Activated T-helper 1 cell treated with anti-CD3 and anti-CD28 coated beads, Interleukin-12 subunit alpha, Interleukin-12 subunit beta, Interleukin-2, Interleukin-4 antibody, amounts not matched to agents 30 ng/mL and 10 ng/mL and 1 ng/mL, durations not matched to agents 14 hours and 24 hours and 36 hours (primary cell): ENCODE measurements at regions of chr4 and their contacts with region 1.

Region 1: DNA sequence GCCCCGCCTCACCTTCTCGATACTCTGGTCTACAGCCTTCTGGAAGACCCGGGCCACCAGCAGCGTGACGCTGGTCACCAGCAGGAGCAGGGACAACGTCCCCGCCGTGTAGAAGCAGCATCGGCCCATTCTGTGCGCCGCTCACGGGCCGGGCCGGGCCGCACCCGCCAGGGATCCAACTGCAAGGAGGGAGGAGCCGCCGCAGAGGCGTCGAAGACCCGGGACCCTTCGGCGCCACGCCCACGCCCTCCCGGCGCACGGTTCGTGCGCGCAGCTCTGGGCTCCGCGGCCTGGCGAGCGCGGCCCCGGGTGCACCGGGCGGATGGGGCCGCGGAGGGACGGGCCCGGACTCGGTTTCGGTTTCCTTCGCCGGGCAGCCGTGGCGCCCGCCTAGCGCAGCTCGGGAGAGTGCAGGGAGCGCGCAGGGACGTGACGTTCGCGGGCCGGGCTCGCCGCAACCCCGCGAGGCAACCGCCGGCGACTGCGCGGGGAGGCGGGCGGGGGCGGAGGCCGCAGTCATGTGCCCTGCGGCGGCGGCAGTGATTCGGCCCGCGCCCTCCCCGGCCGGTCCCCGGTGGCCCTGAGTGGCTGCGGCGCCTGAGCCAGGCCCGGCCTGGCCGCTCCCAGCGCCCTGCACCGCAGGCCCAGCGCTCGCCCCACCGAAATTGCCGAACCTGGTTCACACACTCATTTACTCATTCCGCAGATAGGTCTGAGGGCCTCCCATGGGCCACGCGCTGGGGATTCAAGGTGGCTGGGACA is at the start of gene SCARB2:
- DNase-seq: peak; percentile 72
- H3K4me3 Mint-ChIP-seq: peak within 1 kb of the TSS; percentile 79
- H3K27ac Mint-ChIP-seq: peak within 1 kb of the TSS; percentile 67
- H3K4me1 Mint-ChIP-seq: peaks cover 33% of the 10 kb centered on the region
- H3K27me3 Mint-ChIP-seq: peaks cover 34% of the 10 kb centered on the region
- total RNA-seq, gene SCARB2: 1.3 and 1.4 TPM in 2 replicates

Region 2: GRCh38 chr4:75673027-75673958 is 540.3 kb before region 1 on chr4 and contains the start of gene G3BP2:
- intact Hi-C with region 1: loop called (anchors 5 kb)
- DNase-seq: peak; percentile 96
- H3K4me3 Mint-ChIP-seq: peak within 1 kb of the TSS; percentile 96
- H3K27ac Mint-ChIP-seq: peak within 1 kb of the TSS; percentile 98
- H3K4me1 Mint-ChIP-seq: peaks cover 40% of the 10 kb centered on the region
- H3K27me3 Mint-ChIP-seq: no peaks in the 10 kb centered on the region
- total RNA-seq, gene G3BP2: 143 and 144 TPM in 2 replicates

Region 3: GRCh38 chr4:76148142-76148865 is 65.3 kb before region 1 on chr4 and contains the start of gene NUP54:
- intact Hi-C with region 1: loop called (anchors 1 kb)
- DNase-seq: peak; percentile 94
- H3K4me3 Mint-ChIP-seq: peak within 1 kb of the TSS; percentile 99
- H3K27ac Mint-ChIP-seq: peak within 1 kb of the TSS; percentile 97
- H3K4me1 Mint-ChIP-seq: peaks cover 35% of the 10 kb centered on the region
- H3K27me3 Mint-ChIP-seq: no peaks in the 10 kb centered on the region
- total RNA-seq, gene NUP54: 70.6 and 75.1 TPM in 2 replicates

Region 4: DNA sequence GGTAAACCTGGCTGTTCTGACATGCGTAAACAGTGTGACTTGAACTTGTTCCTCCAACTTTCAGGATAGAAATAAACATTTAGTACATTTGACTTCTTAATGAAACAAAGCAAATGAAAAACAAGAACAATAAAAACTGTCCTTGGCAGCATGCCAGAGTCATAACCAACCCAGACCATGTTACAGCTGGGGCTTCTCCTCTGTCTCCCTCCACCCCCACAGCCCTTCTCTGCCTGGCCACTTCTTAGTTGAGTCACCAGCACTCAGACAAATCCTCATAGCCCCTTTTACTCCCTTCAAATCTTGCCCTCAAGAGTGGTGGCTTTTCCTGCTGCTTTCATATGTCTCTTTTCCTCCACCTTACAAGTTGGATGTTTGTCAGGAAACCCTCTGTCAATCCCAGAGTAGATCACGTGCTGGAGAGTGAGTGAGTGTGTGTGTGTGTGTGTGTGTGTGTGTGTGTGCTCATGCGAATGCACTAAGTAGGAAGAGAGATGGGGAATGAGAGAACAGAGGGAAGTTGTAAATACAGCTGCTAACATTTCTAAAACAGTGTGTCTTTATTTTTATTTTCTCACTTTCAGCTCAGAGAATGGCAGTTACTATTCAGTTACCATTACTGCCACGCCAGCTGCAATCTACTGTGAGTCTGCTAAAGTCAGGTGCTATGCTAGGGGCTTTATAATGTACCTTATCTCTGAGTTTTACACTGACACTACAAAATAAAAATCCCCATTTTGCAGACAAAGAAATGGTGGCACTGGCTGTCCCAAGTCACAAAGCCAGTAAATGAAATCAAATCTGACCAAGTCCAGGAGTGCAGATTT is 15.0 kb before region 1 on chr4:
- intact Hi-C with region 1: loop called (anchors 2 kb)
- DNase-seq: no peak
- H3K4me3 Mint-ChIP-seq: no peak overlapping the region
- H3K27ac Mint-ChIP-seq: no peak overlapping the region
- H3K4me1 Mint-ChIP-seq: peaks cover 33% of the 10 kb centered on the region
- H3K27me3 Mint-ChIP-seq: no peaks in the 10 kb centered on the region

Region 5: GRCh38 chr4:76354517-76355473 is 141.2 kb after region 1 on chr4:
- intact Hi-C with region 1: loop called (anchors 1 kb)
- DNase-seq: peak; percentile 14
- H3K4me3 Mint-ChIP-seq: peak overlapping the region; percentile 1
- H3K27ac Mint-ChIP-seq: no peak overlapping the region
- H3K4me1 Mint-ChIP-seq: peaks cover 21% of the 10 kb centered on the region
- H3K27me3 Mint-ChIP-seq: peaks cover 8% of the 10 kb centered on the region

Region 6: DNA sequence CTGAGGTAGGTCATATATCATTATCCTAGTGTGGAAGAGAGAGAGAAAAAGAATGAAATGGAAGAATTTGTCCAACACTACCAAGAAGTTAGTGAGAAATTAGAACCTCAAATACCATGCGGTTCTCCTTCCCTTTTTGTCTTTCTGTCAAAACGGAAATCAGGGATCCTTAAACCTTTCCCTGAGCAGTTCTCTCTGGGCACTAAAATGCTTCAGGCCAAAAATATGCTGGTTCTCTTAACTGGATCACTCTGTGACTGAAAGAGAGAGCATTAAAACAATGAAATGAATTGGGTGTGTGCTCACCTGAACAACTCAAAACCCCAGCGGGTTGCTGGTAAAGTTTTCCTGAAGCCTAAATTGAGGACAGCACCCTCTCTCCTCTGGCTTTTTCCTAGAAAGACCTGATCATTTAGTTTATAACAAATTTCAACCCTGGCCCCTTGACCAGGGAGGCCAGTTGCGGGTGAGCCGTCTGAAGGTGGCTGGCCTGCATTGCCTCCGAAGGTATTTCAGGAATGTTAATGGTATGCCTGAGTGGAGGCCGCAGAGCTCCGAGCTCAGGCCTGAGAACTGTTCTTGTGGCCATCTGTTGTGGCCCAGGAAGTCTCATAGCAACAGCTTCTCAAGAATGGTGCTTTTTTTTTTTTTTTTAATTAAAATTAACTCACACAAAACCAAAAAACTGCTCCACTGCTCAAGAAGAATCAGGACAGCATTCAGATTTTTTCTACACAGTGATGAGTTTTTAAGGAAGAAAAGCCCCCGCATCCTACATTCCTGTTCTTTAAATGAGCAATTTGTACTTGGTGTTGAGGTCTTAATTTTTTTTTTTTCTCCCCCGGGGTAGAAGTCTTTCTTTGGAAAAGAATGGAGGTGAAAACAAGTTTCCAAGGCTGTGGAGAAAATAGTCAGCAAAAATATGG is 376.5 kb after region 1 on chr4:
- intact Hi-C with region 1: no loop called
- DNase-seq: no peak
- H3K4me3 Mint-ChIP-seq: no peak overlapping the region
- H3K27ac Mint-ChIP-seq: no peak overlapping the region
- H3K4me1 Mint-ChIP-seq: no peaks in the 10 kb centered on the region
- H3K27me3 Mint-ChIP-seq: peaks cover 39% of the 10 kb centered on the region